ENCODE measurements at regions of chr14 and their contacts with region 1.

Region 1: DNA sequence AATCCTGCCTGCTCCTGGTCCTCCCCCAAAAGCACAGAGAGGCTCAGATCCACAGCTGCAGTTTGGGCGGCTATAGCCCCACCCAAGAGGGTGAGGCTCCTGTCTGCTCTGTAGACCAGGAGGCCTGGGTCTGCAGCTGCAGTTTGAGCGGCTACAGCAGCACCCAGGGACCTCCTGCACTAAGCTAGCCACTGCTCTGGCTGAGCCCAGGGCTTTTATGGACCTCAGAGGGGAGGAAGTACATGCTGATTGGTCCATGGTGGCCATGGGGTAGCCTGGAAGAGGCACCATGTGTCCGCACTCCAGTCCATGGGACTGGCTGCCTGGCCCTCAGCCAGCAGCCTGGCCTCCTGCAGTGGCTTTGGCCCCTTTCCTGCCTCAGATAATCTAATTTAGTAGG is 49.6 kb upstream of the GSC start:
- DNase-seq: no peak
- ATAC-seq: no peak
- H3K4me3 ChIP-seq: no peak overlapping the region
- H3K27ac ChIP-seq: no peak overlapping the region
- H3K4me1 ChIP-seq: no peaks in the 10 kb centered on the region
- H3K27me3 ChIP-seq: no peaks in the 10 kb centered on the region

Region 2: GRCh38 chr14:94884616-94885185 is 65.2 kb after region 1 on chr14:
- intact Hi-C with region 1: loop called in 1 of 2 experiments (anchors 2 kb)
- DNase-seq: no peak
- ATAC-seq: no peak
- H3K4me3 ChIP-seq: no peak overlapping the region
- H3K27ac ChIP-seq: no peak overlapping the region
- H3K4me1 ChIP-seq: no peaks in the 10 kb centered on the region
- H3K27me3 ChIP-seq: no peaks in the 10 kb centered on the region